ENCODE measurements at regions of chr2 and their contacts with region 1.

Region 1: DNA sequence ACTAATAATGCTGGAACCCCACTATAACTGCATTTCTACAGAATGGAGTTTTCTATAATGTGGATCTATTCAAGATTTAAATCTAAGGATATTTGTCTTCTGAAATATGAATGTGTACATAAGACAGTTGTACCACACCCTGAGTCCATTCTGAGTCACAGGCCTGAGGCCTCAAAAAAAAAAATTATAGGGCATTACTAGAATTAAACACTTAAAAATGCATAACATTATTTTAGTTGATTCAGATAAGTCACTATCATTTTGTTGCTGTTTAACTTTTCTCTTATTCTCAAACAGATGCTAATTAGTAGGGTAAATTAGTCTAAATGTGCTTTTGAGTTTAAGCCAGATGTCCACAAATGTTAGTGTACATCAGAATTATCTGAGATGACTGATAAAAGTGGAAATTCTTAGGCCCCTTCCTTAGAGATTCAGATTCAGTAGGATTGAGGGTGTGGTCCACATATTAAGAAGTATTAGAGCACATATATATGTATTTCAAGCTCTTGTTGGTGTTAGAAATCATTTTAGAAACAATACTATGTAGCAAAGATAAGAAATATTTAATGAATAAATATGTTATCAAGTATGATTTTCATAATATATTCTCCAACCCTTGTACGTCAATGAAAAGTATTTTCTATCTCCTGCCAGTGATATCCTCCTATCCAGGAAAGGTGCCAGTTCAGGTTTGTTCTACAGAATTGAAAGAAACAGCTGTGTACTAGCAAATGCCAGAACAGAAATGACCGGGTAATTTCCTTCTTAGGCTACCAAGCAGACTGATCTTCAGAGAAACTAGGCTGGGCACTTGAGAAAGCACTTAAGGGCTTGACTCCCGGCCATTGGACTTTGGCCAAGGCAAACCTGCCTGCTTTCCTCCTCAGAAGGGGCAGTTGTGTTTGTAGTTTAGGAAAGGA is 42.6 kb upstream of the COL5A2 start:
- DNase-seq: peak; percentile 54
- H3K4me3 Mint-ChIP-seq: no peak overlapping the region
- H3K27ac Mint-ChIP-seq: peak overlapping the region; percentile 50
- H3K4me1 Mint-ChIP-seq: peaks cover 18% of the 10 kb centered on the region
- H3K27me3 Mint-ChIP-seq: no peaks in the 10 kb centered on the region
- CTCF ChIP-seq: no peak

Region 2: GRCh38 chr2:188884046-188884445 is 338.1 kb before region 1 on chr2:
- CTCF ChIA-PET with region 1: no interaction called
- intact Hi-C with region 1: no loop called
- DNase-seq: no peak
- H3K4me3 Mint-ChIP-seq: no peak overlapping the region
- H3K27ac Mint-ChIP-seq: no peak overlapping the region
- H3K4me1 Mint-ChIP-seq: no peaks in the 10 kb centered on the region
- H3K27me3 Mint-ChIP-seq: no peaks in the 10 kb centered on the region
- CTCF ChIP-seq: no peak

Region 3: DNA sequence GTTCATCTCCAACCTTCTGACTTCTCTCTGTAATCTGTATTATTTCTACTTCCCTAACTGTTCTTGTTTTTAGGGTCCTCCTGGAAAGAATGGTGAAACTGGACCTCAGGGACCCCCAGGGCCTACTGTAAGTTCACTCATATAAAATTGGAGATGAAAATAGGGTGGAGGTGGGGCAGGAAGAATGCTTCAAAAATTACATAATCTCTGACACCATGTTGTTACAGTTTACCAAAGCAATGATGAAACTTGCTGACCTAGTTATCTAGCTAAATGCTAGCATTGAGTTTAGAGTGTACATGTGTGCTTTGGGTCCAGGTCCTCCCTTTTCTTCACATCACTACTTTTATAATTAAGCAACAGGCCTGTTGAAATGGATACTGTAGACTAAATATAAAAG is 224.8 kb before region 1 on chr2:
- CTCF ChIA-PET with region 1: no interaction called
- intact Hi-C with region 1: no loop called
- DNase-seq: no peak
- H3K4me3 Mint-ChIP-seq: no peak overlapping the region
- H3K27ac Mint-ChIP-seq: no peak overlapping the region
- H3K4me1 Mint-ChIP-seq: peaks cover 1% of the 10 kb centered on the region
- H3K27me3 Mint-ChIP-seq: no peaks in the 10 kb centered on the region
- CTCF ChIP-seq: no peak

Region 4: DNA sequence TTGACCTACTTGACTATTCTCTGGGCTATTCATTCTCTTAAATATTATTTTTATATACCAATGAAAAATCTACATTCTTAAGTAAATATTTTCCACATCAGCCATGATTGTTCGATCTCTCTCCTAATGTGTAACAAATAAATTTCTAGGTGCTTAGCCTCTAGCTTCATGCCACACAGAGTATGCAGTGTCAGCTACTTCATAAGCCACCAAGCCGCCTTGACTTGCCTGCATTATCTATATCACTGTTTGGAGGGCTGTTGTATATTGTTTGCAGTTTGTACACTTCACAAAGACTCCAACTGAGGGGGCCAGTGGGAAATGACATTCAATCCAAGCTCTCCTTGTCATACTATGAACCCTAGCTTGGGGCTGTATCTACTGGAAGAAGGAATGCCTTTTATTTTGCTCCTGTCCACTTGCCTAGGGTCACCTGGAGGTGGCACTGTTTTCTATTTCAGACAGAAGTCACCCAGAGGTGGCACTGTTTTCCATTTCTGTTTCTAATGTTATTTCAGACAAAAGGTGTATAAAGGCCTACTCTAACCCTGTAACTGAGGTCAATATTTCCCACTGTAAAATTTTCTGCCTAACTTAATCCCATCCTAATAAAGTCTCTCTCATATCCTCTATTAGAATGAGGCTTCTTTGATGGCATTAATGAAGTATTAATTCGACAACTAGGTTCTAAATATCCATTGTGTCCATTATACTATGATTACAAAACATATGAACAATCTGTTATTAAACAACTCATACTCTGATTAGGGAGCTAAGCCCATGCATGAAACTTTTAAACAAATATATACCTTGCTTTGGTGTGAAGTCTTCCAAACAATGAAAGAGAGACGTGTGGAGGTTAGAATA is 79.0 kb before region 1 on chr2:
- CTCF ChIA-PET with region 1: no interaction called
- intact Hi-C with region 1: loop called (anchors 2 kb)
- DNase-seq: peak; percentile 63
- H3K4me3 Mint-ChIP-seq: no peak overlapping the region
- H3K27ac Mint-ChIP-seq: no peak overlapping the region
- H3K4me1 Mint-ChIP-seq: no peaks in the 10 kb centered on the region
- H3K27me3 Mint-ChIP-seq: no peaks in the 10 kb centered on the region
- CTCF ChIP-seq: peak; percentile 94

Region 5: DNA sequence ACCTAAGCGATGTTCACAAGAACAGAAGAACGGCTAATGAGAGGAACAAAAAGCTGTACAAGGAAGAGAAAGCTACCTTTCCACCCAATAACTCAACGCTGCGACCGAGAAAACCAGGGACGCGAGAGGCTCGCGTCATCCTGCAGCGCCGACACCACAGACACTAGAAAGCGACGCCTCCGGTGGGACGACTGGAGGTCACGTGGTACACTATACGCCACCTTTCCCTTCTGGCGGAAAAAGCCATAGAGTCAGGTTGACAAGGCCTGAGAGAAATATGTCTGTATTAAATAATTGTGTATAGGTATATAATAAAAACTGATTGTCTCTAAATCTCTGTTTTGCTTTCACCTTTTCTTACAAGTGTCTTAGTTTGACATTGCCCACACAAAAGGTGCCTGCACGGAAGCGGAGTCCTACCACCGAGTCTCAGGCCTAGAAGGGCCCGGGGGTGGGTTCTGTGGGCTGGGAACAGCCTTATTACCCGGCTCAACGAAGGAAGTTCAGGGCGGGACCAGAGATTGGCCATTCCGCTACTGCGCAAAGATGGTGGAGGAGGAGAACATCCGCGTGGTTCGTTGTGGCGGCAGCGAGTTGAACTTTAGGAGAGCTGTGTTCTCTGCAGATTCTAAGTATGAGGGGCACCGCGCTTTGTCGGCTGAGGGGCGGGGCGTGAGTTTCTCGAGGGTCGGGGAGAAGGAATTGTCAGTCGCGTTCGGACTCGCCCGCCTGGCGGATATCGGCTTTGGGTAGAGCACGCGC is 219.0 kb after region 1 on chr2 and contains the start of gene WDR75:
- CTCF ChIA-PET with region 1: no interaction called
- intact Hi-C with region 1: no loop called
- DNase-seq: peak; percentile 91
- H3K4me3 Mint-ChIP-seq: no peak within 1 kb of the TSS
- H3K27ac Mint-ChIP-seq: peak within 1 kb of the TSS; percentile 97
- H3K4me1 Mint-ChIP-seq: no peaks in the 10 kb centered on the region
- H3K27me3 Mint-ChIP-seq: no peaks in the 10 kb centered on the region
- CTCF ChIP-seq: no peak
- total RNA-seq, gene WDR75: 53.8 and 57.7 TPM in 2 replicates